PC-3 (cell line): ENCODE measurements at regions of chr7 and their contacts with region 1.

Region 1: GRCh38 chr7:121081327-121081936 is 92.9 kb downstream of the CPED1 start:
- DNase-seq: peak; percentile 90
- ATAC-seq: peak; percentile 1
- H3K4me3 ChIP-seq: no peak overlapping the region
- H3K27ac ChIP-seq: no peak overlapping the region
- H3K4me1 ChIP-seq: peaks cover 74% of the 10 kb centered on the region
- H3K27me3 ChIP-seq: no peaks in the 10 kb centered on the region
- CTCF ChIP-seq: peak; percentile 78

Region 2: DNA sequence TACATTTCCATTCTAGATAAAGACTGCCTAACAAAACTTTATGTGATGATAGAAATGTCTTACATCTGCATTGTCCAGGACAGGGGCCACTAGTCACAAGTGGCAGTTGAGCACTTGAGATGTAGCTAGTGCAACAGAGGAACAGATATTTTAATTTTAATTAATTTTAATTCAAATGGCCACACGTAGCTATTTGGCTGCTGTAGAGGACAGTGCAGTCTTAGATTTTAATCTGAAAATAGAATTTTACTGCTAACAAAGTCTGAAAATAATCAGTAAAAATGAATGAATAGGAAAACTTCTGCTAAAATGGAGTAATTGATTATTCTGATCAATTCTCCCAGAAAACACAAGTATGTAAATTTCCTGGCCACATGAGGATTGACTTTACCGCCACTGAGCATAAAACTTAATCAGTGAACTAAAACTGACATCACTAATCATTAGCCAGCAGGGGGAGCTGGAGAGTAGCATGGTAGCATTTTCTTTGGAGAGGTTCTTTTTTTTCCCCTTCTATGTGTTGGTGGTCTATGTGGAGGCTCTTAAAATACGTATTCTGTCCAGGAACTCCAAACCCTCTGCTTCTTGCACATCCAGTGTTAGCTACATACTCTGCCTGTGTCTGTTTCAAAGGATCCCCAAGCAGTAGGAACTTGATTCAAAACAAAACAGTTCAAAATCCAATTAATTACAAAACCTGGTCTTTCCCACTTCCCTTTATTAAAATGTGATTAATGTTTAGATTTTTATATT is 275.6 kb before region 1 on chr7:
- CTCF ChIA-PET with region 1: no interaction called
- POLR2A ChIA-PET with region 1: no interaction called
- intact Hi-C with region 1: loop called (anchors 2 kb)
- DNase-seq: peak; percentile 72
- ATAC-seq: peak; percentile 61
- H3K4me3 ChIP-seq: no peak overlapping the region
- H3K27ac ChIP-seq: no peak overlapping the region
- H3K4me1 ChIP-seq: no peaks in the 10 kb centered on the region
- H3K27me3 ChIP-seq: no peaks in the 10 kb centered on the region
- CTCF ChIP-seq: peak; percentile 83

Region 3: GRCh38 chr7:120950539-120951308 is 130.7 kb before region 1 on chr7 and contains the start of gene ING3:
- CTCF ChIA-PET with region 1: interaction called, 3 read pairs
- POLR2A ChIA-PET with region 1: interaction called, 17 read pairs
- intact Hi-C with region 1: loop called (anchors 1 kb)
- DNase-seq: peak; percentile 97
- ATAC-seq: peak; percentile 90
- H3K4me3 ChIP-seq: peak within 1 kb of the TSS; percentile 93
- H3K27ac ChIP-seq: peak within 1 kb of the TSS; percentile 92
- H3K4me1 ChIP-seq: peaks cover 10% of the 10 kb centered on the region; the same call in 1 of the 2 replicates
- H3K27me3 ChIP-seq: no peaks in the 10 kb centered on the region
- CTCF ChIP-seq: no peak
- total RNA-seq, gene ING3: 12.4 and 12.8 TPM in 2 replicates

Region 4: GRCh38 chr7:121003986-121004685 is 77.3 kb before region 1 on chr7:
- CTCF ChIA-PET with region 1: interaction called, 5 read pairs
- POLR2A ChIA-PET with region 1: no interaction called
- intact Hi-C with region 1: loop called (anchors 1 kb)
- DNase-seq: no peak
- ATAC-seq: no peak
- H3K4me3 ChIP-seq: no peak overlapping the region
- H3K27ac ChIP-seq: no peak overlapping the region
- H3K4me1 ChIP-seq: peaks cover 29% of the 10 kb centered on the region
- H3K27me3 ChIP-seq: no peaks in the 10 kb centered on the region
- CTCF ChIP-seq: no peak

Region 5: GRCh38 chr7:121099572-121099971 is 18.1 kb after region 1 on chr7:
- CTCF ChIA-PET with region 1: interaction called, 3 read pairs
- POLR2A ChIA-PET with region 1: no interaction called
- intact Hi-C with region 1: loop called (anchors 2 kb)
- DNase-seq: peak; percentile 56
- ATAC-seq: peak; percentile 61
- H3K4me3 ChIP-seq: no peak overlapping the region
- H3K27ac ChIP-seq: no peak overlapping the region
- H3K4me1 ChIP-seq: peaks cover 21% of the 10 kb centered on the region
- H3K27me3 ChIP-seq: no peaks in the 10 kb centered on the region
- CTCF ChIP-seq: peak; percentile 53; the same call in 1 of the 2 replicates